Dorsolateral prefrontal cortex (tissue), 120 donors: ENCODE measurements at regions of chr1 and their contacts with region 1.

Region 1: DNA sequence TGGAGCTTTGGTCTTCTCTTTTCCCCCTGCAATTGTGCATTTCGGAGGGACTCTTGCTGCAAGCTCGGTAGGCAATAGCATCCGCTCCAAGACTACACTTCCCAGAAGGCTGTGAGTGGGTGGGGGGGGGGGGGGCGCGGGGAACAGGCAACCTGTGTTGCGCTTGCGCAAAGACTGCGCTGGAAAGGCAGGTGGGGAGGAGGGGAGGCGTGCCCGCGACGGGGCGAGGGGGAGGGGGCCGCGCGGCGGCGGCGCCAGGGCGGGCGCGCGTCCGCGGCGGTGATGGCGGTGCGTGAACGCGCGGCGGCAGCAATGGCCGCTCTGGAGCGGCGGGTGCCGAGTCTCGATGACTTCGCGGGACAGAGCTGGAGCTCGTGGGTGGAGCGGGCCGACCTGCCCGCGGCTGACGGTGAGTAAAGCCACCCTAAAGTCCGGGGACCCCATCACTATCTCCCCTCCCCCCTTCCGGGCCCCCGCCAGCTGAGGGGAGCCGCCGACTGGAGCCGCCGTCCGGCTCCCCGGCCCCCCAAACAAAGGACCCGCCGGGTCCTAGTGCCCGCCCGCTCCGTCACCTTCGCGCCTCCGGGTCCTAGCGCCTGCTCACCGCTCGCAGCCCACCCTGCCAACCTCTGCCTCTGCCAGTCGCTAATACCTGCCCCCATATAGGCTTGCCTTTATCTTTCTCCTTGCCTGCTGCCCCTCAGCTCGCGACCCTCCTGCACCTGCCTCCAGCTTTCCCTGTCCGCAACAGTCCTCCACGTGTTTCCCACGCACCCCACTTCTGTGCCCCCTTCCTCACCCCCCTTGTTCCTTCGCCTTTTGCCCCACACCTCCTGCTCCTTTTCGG is at the start of gene ATXN7L2:
- DNase-seq: peak; percentile 76 to 93 (median 88)
- H3K4me3 ChIP-seq: peak within 1 kb of the TSS; percentile 67 to 96 (median 80)
- H3K27ac ChIP-seq: peak within 1 kb of the TSS; percentile 86 to 100 (median 99)
- H3K27me3 ChIP-seq: no peaks in the 10 kb centered on the region
- CTCF ChIP-seq: peak in 25 of 56 donors; percentile 6 to 50 (median 23)
- total RNA-seq, gene ATXN7L2: 6.6 to 31.7 (median 13.9) TPM

Region 2: GRCh38 chr1:109151164-109151990 is 332.5 kb before region 1 on chr1:
- intact Hi-C with region 1: no loop called
- DNase-seq: peak; percentile 8 to 79 (median 68)
- H3K4me3 ChIP-seq: no peak overlapping the region
- H3K27ac ChIP-seq: peak overlapping the region in 58 of 59 donors; percentile 3 to 94 (median 78)
- H3K27me3 ChIP-seq: no peaks in the 10 kb centered on the region
- CTCF ChIP-seq: no peak

Region 3: GRCh38 chr1:109249654-109250465 is 234.0 kb before region 1 on chr1:
- intact Hi-C with region 1: loop called in 1 of 2 experiments (anchors 5 kb)
- DNase-seq: peak in 2 of 10 donors; percentile 38 to 45
- H3K4me3 ChIP-seq: peak overlapping the region; percentile 48 to 89 (median 68)
- H3K27ac ChIP-seq: peak overlapping the region in 54 of 59 donors; percentile 28 to 90 (median 73)
- H3K27me3 ChIP-seq: no peaks in the 10 kb centered on the region
- CTCF ChIP-seq: no peak

Region 4: GRCh38 chr1:109426278-109427170 is 57.4 kb before region 1 on chr1 and contains the start of gene PSMA5:
- intact Hi-C with region 1: loop called (anchors 1 kb)
- DNase-seq: peak; percentile 91 to 98 (median 97)
- H3K4me3 ChIP-seq: peak within 1 kb of the TSS; percentile 70 to 99 (median 94)
- H3K27ac ChIP-seq: peak within 1 kb of the TSS in 58 of 59 donors; percentile 2 to 92 (median 82)
- H3K27me3 ChIP-seq: no peaks in the 10 kb centered on the region
- CTCF ChIP-seq: peak in 20 of 56 donors; percentile 4 to 48 (median 27)
- total RNA-seq, gene PSMA5: 25.5 to 74.2 (median 56.7) TPM